ENCODE measurements at regions of chr2 and their contacts with region 1.

Region 1: GRCh38 chr2:118221666-118222594 is 133.7 kb downstream of the INSIG2 start:
- DNase-seq: peak; percentile 74
- ATAC-seq: peak; percentile 53
- H3K4me3 ChIP-seq: no peak overlapping the region
- H3K4me3 Mint-ChIP-seq: peak overlapping the region; percentile 4
- H3K27ac ChIP-seq: no peak overlapping the region
- H3K27ac Mint-ChIP-seq: no peak overlapping the region
- H3K4me1 ChIP-seq: peaks cover 18 to 22% of the 10 kb centered on the region in 2 donors
- H3K4me1 Mint-ChIP-seq: peaks cover 21% of the 10 kb centered on the region
- H3K27me3 ChIP-seq: peaks cover 5 to 49% (median 45%) of the 10 kb centered on the region in 4 experiments
- H3K27me3 Mint-ChIP-seq: peaks cover 64% of the 10 kb centered on the region
- CTCF ChIP-seq: peak; percentile 83

Region 2: DNA sequence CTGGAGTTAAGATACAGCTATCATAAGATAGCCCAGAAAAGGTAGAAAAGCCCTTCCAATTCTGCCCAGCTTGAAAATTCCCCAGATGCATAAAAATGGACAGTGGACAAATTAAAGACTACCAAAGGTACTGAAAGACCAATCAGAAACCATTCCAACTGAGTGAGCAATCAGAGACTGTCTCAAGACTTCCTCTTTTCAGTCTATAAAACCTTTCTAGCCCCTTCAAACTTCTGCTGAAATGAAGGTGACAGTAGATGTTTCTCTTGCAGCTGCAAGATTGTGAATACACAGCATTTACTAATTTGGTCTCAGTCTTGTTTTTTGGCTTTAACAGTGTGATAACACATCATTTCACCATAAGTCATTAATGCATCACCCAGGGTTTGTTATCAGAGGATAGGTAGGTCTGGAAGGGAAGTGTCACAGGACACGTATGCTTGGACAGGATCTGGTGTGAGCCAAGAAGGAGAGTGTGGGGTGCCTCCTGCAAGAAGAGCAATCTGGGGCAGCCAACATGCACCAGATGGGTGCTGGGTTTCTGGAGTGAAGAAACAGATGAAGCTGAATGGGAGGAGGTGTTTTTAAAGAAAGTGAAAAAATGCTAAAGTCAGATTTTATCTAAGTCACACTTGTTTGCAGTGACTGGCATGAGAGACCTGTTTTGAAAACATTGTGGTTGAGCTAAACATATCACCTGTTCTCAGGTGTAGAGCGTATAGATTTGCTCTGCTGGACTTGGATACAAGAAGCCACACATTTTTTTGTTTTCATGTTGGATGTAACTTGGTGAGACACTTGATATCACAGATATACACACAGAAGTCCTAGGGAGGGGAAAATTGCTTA is 482.7 kb before region 1 on chr2:
- CTCF ChIA-PET with region 1: no interaction called
- POLR2A ChIA-PET with region 1: no interaction called
- intact Hi-C with region 1: no loop called
- DNase-seq: no peak
- ATAC-seq: no peak
- H3K4me3 ChIP-seq: no peak overlapping the region
- H3K4me3 Mint-ChIP-seq: no peak overlapping the region
- H3K27ac ChIP-seq: no peak overlapping the region
- H3K27ac Mint-ChIP-seq: no peak overlapping the region
- H3K4me1 ChIP-seq: no peaks in the 10 kb centered on the region
- H3K4me1 Mint-ChIP-seq: no peaks in the 10 kb centered on the region
- H3K27me3 ChIP-seq: no peaks in the 10 kb centered on the region
- H3K27me3 Mint-ChIP-seq: peaks cover 10% of the 10 kb centered on the region
- CTCF ChIP-seq: no peak

Region 3: DNA sequence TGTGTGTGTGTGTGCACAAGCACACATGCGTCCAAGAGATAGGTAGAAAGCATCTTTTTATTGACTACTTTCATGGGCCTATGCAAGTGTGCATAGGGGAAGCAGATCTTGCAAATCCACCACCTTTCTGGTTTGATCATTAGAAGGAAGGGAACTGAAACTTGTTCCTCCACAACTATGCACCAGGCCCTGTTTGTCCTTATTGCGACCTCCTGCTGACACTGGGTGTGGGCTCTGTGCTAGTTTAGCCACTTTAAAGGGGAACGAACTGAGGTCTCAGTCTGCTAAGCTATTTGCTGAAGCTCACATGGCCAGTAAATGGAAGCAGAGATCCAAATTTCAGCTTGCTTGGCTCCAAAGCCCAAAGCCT is 165.8 kb before region 1 on chr2:
- CTCF ChIA-PET with region 1: interaction called, 3 read pairs
- POLR2A ChIA-PET with region 1: no interaction called
- intact Hi-C with region 1: loop called (anchors 5 kb)
- DNase-seq: peak; percentile 86
- ATAC-seq: peak; percentile 91
- H3K4me3 ChIP-seq: peak overlapping the region in 2 of 5 experiments; percentile 16 to 22
- H3K4me3 Mint-ChIP-seq: peak overlapping the region; percentile 80
- H3K27ac ChIP-seq: peak overlapping the region; percentile 67 to 88
- H3K27ac Mint-ChIP-seq: peak overlapping the region; percentile 98
- H3K4me1 ChIP-seq: peaks cover 52 to 63% of the 10 kb centered on the region in 2 donors
- H3K4me1 Mint-ChIP-seq: peaks cover 60% of the 10 kb centered on the region
- H3K27me3 ChIP-seq: no peaks in the 10 kb centered on the region
- H3K27me3 Mint-ChIP-seq: no peaks in the 10 kb centered on the region
- CTCF ChIP-seq: no peak

Region 4: GRCh38 chr2:118202707-118203303 is 19.1 kb before region 1 on chr2:
- CTCF ChIA-PET with region 1: interaction called, 25 read pairs
- POLR2A ChIA-PET with region 1: no interaction called
- intact Hi-C with region 1: no loop called
- DNase-seq: peak; percentile 66
- ATAC-seq: peak; percentile 87
- H3K4me3 ChIP-seq: no peak overlapping the region
- H3K4me3 Mint-ChIP-seq: no peak overlapping the region
- H3K27ac ChIP-seq: no peak overlapping the region
- H3K27ac Mint-ChIP-seq: no peak overlapping the region
- H3K4me1 ChIP-seq: peaks cover 0 to 5% of the 10 kb centered on the region in 2 donors
- H3K4me1 Mint-ChIP-seq: peaks cover 4% of the 10 kb centered on the region
- H3K27me3 ChIP-seq: peaks cover 0 to 15% (median 6%) of the 10 kb centered on the region in 4 experiments
- H3K27me3 Mint-ChIP-seq: peaks cover 47% of the 10 kb centered on the region
- CTCF ChIP-seq: peak; percentile 91

Region 5: GRCh38 chr2:118855451-118856279 is 633.7 kb after region 1 on chr2:
- CTCF ChIA-PET with region 1: interaction called, 54 read pairs
- POLR2A ChIA-PET with region 1: no interaction called
- intact Hi-C with region 1: no loop called
- DNase-seq: peak; percentile 85
- ATAC-seq: peak; percentile 87
- H3K4me3 ChIP-seq: peak overlapping the region in 4 of 5 experiments; percentile 18 to 59 (median 38)
- H3K4me3 Mint-ChIP-seq: peak overlapping the region; percentile 75
- H3K27ac ChIP-seq: no peak overlapping the region
- H3K27ac Mint-ChIP-seq: no peak overlapping the region
- H3K4me1 ChIP-seq: peaks cover 30 to 57% of the 10 kb centered on the region in 2 donors
- H3K4me1 Mint-ChIP-seq: peaks cover 23% of the 10 kb centered on the region
- H3K27me3 ChIP-seq: peaks cover 0 to 98% (median 81%) of the 10 kb centered on the region in 4 experiments
- H3K27me3 Mint-ChIP-seq: peaks cover 73% of the 10 kb centered on the region
- CTCF ChIP-seq: peak; percentile 88

Region 6: GRCh38 chr2:119311356-119311755 is 1089.4 kb after region 1 on chr2:
- CTCF ChIA-PET with region 1: no interaction called
- POLR2A ChIA-PET with region 1: no interaction called
- intact Hi-C with region 1: loop called (anchors 5 kb)
- DNase-seq: no peak
- ATAC-seq: no peak
- H3K4me3 ChIP-seq: no peak overlapping the region
- H3K4me3 Mint-ChIP-seq: no peak overlapping the region
- H3K27ac ChIP-seq: no peak overlapping the region
- H3K27ac Mint-ChIP-seq: no peak overlapping the region
- H3K4me1 ChIP-seq: peaks cover 3% of the 10 kb centered on the region in 2 donors
- H3K4me1 Mint-ChIP-seq: peaks cover 22% of the 10 kb centered on the region
- H3K27me3 ChIP-seq: no peaks in the 10 kb centered on the region
- H3K27me3 Mint-ChIP-seq: no peaks in the 10 kb centered on the region
- CTCF ChIP-seq: no peak

Measured in B cell (primary cell).